ENCODE measurements at regions of chr1 and their contacts with region 1.

Region 1: DNA sequence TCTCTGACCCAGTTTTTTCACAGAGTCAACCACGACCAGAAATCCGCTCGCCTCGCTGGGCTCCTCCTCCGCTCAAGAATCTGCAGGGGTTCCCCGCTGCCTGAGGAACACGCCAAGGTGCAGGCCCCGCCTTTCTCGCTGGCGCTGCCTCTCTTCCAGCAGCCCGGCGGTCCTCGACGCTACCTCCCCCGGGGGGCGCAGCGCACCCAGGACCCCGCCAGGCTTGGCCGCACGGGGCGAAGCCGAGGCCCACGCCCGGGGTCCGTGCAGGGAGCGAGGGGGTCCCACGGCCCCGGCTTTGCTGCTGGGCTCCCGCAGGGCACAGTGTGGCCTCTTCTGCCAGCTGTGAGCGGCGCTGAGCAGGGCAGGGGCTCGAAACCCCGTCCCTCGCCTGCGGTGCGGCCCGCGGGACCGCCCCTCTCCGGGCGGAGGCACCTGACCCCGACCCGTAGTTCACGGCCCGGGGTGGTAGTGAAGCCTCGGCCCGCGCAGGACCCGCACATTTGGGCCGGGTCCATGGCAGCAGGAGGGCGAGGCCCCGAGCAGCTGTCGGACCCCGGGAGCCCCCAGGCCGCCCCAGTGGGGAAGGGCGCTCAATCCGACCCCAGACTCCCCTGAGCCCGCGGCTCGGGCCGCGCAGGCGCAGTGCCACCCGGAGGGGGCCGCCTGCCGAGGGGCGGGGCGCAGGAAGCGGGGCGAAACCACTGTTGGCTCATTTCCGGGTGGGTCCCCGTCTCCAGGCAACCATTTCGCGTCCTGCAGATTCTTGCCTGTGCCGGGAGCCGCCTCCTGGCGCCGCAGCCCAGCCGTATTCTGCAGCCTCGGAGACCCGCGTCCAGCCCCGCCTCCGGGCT is 10.0 kb upstream of the MMEL1 start:
- DNase-seq: peak; percentile 92 to 96
- ATAC-seq: peak; percentile 81 to 96 (median 92)
- H3K4me3 ChIP-seq: peak overlapping the region; percentile 72 to 98 (median 90)
- H3K27ac ChIP-seq: peak overlapping the region; percentile 20 to 98 (median 90)
- H3K4me1 ChIP-seq: peaks cover 8 to 21% (median 18%) of the 10 kb centered on the region in 9 donors
- H3K27me3 ChIP-seq: no peaks in the 10 kb centered on the region
- CTCF ChIP-seq: peak in 6 of 9 donors; percentile 11 to 51 (median 32)

Region 2: GRCh38 chr1:2194898-2195673 is 447.7 kb before region 1 on chr1:
- intact Hi-C with region 1: loop called in 1 of 10 experiments (anchors 10 kb)
- DNase-seq: peak; percentile 92
- ATAC-seq: peak; percentile 77 to 86 (median 82)
- H3K4me3 ChIP-seq: peak overlapping the region; percentile 47 to 78 (median 70)
- H3K27ac ChIP-seq: peak overlapping the region; percentile 90 to 98 (median 94)
- H3K4me1 ChIP-seq: peaks cover 36 to 71% (median 65%) of the 10 kb centered on the region in 9 donors
- H3K27me3 ChIP-seq: no peaks in the 10 kb centered on the region
- CTCF ChIP-seq: peak; percentile 91 to 98 (median 95)

Region 3: DNA sequence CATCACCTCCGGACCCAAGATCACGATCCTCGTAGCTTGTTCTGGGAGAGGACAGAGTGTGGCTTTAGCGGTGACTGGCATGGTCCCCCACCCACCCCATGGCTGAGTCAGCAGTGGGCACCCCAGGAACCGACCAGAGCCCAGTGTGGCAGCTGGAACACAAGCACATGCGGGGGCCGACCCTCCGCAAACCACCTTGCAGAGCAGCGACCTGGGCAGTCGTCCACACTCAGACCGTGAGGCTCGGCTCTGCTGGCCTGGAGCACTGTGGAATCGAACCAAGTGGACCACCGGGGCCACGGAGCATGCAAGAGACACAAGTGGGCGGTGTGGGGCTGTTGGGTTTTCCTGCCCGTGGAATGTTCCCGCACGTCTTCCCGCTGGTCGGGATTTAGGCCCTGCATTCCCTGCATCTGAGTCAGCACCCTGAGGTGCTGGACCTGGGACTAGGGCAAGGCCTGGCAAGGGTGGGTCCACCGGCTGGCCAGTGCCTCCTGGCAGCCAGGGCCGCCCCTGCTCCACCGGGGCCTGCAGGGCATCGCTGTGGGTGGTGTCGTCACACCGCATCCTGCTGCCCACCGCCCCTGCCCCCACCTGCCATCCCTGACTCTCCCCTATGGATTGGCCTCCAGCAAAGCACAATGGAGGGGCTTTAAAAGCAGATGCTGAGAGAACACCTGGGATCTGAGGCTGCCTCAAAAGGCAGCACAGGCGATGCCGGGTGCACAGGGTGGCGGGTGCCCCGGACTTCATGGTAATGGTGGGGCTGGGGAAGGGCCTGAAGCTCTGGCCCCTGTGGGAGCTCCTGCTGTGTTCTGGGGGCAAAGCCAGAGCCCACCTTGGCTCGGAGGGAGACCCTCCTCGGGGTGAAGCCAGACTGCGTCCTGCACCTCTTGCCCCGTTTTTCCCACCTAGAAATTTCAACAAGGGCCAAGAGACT is 270.0 kb before region 1 on chr1:
- intact Hi-C with region 1: no loop called
- DNase-seq: no peak
- ATAC-seq: no peak
- H3K4me3 ChIP-seq: no peak overlapping the region
- H3K27ac ChIP-seq: no peak overlapping the region
- H3K4me1 ChIP-seq: no peaks in the 10 kb centered on the region
- H3K27me3 ChIP-seq: no peaks in the 10 kb centered on the region
- CTCF ChIP-seq: no peak

Region 4: DNA sequence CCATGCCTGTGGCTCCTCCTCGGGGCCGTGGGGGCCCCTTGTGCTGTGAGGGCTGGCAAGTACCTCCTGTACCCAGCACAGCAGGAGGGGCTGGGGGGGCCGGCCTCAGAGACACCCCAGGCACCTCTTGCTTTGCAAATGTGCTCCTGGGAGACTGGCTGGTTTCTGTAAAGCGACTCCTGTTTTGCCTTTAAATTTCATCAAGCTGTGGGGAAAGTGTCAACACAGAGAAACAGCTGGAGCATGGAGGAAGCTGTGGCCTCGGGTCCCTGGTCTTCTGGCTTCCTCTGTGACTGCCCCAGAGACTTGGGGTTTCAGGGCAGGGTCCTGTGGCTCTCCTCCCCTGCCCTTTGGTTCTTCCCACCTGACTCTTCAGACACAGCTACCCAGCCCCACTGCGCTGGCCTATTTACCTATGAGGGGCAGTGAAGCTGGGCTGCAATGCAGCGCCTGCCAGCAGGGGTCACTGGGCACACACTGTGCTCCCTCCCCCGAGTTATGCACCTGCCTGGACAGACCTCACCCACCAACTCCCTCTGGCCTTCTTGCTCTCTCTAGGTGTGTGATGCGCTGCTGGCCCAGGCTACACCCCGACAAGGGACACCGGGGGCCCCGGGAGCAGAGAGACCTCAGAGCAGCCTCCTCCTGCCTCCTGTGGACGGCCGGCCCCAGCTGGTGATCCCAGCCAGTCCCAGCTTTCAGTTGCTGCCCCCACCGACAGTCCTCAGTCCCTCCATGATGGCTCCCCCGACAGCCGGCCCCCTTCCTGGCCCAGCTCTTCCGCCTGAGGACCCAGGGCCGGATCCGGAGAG is 212.8 kb before region 1 on chr1:
- intact Hi-C with region 1: loop called in 1 of 10 experiments (anchors 10 kb)
- DNase-seq: no peak
- ATAC-seq: no peak
- H3K4me3 ChIP-seq: no peak overlapping the region
- H3K27ac ChIP-seq: no peak overlapping the region
- H3K4me1 ChIP-seq: no peaks in the 10 kb centered on the region
- H3K27me3 ChIP-seq: peaks cover 4 to 85% (median 72%) of the 10 kb centered on the region in 7 donors
- CTCF ChIP-seq: peak in 1 of 9 donors; percentile 31

Region 5: GRCh38 chr1:2545759-2546514 is 96.8 kb before region 1 on chr1:
- intact Hi-C with region 1: loop called in 1 of 10 experiments (anchors 10 kb)
- DNase-seq: peak; percentile 90 to 91
- ATAC-seq: peak; percentile 46 to 60 (median 51)
- H3K4me3 ChIP-seq: peak overlapping the region; percentile 39 to 74 (median 59)
- H3K27ac ChIP-seq: peak overlapping the region; percentile 62 to 100 (median 98)
- H3K4me1 ChIP-seq: peaks cover 43 to 81% (median 73%) of the 10 kb centered on the region in 9 donors
- H3K27me3 ChIP-seq: peaks cover 0 to 14% (median 2%) of the 10 kb centered on the region in 7 donors
- CTCF ChIP-seq: no peak

Region 6: GRCh38 chr1:2594001-2594640 is 48.7 kb before region 1 on chr1:
- intact Hi-C with region 1: loop called in 4 of 10 experiments (anchors 5 to 10 kb)
- DNase-seq: peak; percentile 68 to 77
- ATAC-seq: peak in 6 of 8 donors; percentile 19 to 78 (median 64)
- H3K4me3 ChIP-seq: peak overlapping the region in 9 of 10 donors; percentile 6 to 51 (median 34)
- H3K27ac ChIP-seq: peak overlapping the region in 1 of 10 donors; percentile 6
- H3K4me1 ChIP-seq: peaks cover 0 to 16% (median 11%) of the 10 kb centered on the region in 9 donors
- H3K27me3 ChIP-seq: peaks cover 0 to 26% (median 0%) of the 10 kb centered on the region in 7 donors
- CTCF ChIP-seq: no peak

Measured in heart right ventricle (tissue), 16 donors.